Esophagus muscularis mucosa (tissue), 4 donors: ENCODE measurements at regions of chr12 and their contacts with region 1.

Region 1: DNA sequence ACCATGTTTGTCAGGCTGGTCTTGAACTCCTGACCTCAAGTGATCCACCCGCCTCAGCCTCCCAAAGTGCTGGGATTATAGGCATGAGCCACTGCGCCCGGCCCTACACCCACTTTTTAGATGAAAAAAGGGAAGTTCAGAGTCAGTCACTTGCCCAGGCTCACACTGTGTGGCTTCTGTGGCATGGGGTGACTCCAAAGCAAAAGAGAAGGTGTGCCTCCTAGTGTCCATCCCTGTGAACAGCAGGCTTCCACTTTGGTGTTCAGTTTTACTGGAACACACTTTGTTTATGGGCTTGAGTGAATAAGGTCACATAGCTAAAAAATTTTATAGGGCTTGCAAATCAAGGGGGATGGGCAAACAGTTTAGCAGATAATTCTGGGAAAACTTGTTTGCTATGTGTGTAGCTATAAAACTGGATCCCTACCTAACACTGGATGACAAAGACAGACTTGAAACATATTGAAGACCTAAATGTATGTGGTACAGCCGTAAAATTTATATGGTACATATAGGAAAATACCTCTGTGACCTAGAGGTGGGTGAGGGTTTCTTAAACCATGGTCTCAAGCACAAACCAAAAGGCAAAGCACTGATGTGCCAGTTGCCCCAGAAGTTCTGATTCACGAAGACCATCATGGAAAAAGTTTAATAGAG is 54.9 kb downstream of the EID3 start:
- DNase-seq: peak; percentile 91
- H3K4me3 ChIP-seq: no peak overlapping the region
- H3K27ac ChIP-seq: no peak overlapping the region
- H3K4me1 ChIP-seq: no peaks in the 10 kb centered on the region
- H3K27me3 ChIP-seq: no peaks in the 10 kb centered on the region
- CTCF ChIP-seq: peak; percentile 80 to 90 (median 89)
- EP300 ChIP-seq: no peak
- POLR2A ChIP-seq: no peak

Region 2: GRCh38 chr12:104294845-104295688 is 63.4 kb before region 1 on chr12:
- intact Hi-C with region 1: loop called (anchors 5 kb)
- DNase-seq: no peak
- H3K4me3 ChIP-seq: no peak overlapping the region
- H3K27ac ChIP-seq: peak overlapping the region; percentile 6 to 58 (median 34)
- H3K4me1 ChIP-seq: peaks cover 57 to 100% (median 95%) of the 10 kb centered on the region in 4 donors
- H3K27me3 ChIP-seq: no peaks in the 10 kb centered on the region
- CTCF ChIP-seq: no peak
- EP300 ChIP-seq: no peak
- POLR2A ChIP-seq: no peak

Region 3: GRCh38 chr12:104309446-104309993 is 49.0 kb before region 1 on chr12:
- intact Hi-C with region 1: no loop called
- DNase-seq: no peak
- H3K4me3 ChIP-seq: no peak overlapping the region
- H3K27ac ChIP-seq: no peak overlapping the region
- H3K4me1 ChIP-seq: peaks cover 33 to 56% (median 45%) of the 10 kb centered on the region in 4 donors
- H3K27me3 ChIP-seq: no peaks in the 10 kb centered on the region
- CTCF ChIP-seq: no peak
- EP300 ChIP-seq: no peak
- POLR2A ChIP-seq: no peak